GM12878 (cell line): ENCODE measurements at regions of chr1 and their contacts with region 1.

Region 1: DNA sequence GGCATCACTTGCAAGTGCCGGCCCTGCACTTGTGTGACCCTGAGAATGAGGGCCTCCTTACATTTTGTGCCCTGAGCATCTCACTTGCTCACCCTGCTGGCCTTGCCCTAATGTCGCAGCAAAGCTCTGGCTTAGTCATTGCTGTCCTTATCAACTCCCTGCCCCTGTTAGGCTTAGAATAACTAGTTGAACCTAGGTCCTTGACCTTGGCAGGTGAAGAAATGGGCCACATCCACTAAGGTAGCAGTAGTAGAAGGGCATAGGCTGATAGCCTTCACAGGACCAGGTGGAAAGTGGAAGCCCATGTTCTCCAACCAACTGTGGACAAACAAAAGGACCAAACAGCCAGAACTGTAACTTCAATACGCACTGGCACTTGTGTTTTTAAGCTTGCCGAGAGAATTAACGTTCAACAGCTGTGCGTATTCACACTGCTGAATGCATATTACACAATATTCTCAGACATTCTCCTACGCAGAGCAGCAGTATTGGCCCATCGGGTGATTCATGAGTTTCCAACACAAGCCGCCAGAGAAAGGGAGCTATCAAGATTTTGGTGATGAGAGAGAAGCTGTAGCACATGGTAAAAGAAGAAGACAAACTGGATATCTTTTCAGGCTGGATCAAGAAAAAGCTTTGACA is 27.7 kb upstream of the PTGFRN start:
- DNase-seq: no peak
- ATAC-seq: peak; percentile 69
- H3K4me3 ChIP-seq: no peak overlapping the region
- H3K27ac ChIP-seq: no peak overlapping the region
- H3K4me1 ChIP-seq: peaks cover 14% of the 10 kb centered on the region; the same call in 1 of the 2 replicates
- H3K27me3 ChIP-seq: no peaks in the 10 kb centered on the region
- CTCF ChIP-seq: peak; percentile 45 to 73 (median 65)
- EP300 ChIP-seq: no peak
- POLR2A ChIP-seq: no peak
- RAD21 ChIP-seq: peak; percentile 79

Region 2: GRCh38 chr1:116679091-116679827 is 202.7 kb before region 1 on chr1:
- CTCF ChIA-PET with region 1: no interaction called
- POLR2A ChIA-PET with region 1: no interaction called
- RAD21 ChIA-PET with region 1: no interaction called
- SMC1A ChIA-PET with region 1: no interaction called
- in situ Hi-C with region 1: no loop called
- intact Hi-C with region 1: no loop called
- DNase-seq: no peak
- ATAC-seq: no peak; the same call in 2 of the 3 replicates
- H3K4me3 ChIP-seq: no peak overlapping the region
- H3K27ac ChIP-seq: no peak overlapping the region
- H3K4me1 ChIP-seq: no peaks in the 10 kb centered on the region
- H3K27me3 ChIP-seq: no peaks in the 10 kb centered on the region
- CTCF ChIP-seq: 0 out of 6 replicates have a peak, but pooled peaks of 1 of the 3 experiments have one; percentile 12
- EP300 ChIP-seq: no peak
- POLR2A ChIP-seq: no peak
- RAD21 ChIP-seq: no peak

Region 3: GRCh38 chr1:116724765-116725375 is 157.1 kb before region 1 on chr1:
- CTCF ChIA-PET with region 1: interaction called, 47 read pairs
- POLR2A ChIA-PET with region 1: interaction called, 10 read pairs
- RAD21 ChIA-PET with region 1: interaction called, 6 read pairs
- SMC1A ChIA-PET with region 1: interaction called, 13 read pairs
- in situ Hi-C with region 1: no loop called
- intact Hi-C with region 1: no loop called
- DNase-seq: no peak
- ATAC-seq: peak; percentile 88
- H3K4me3 ChIP-seq: no peak overlapping the region
- H3K27ac ChIP-seq: no peak overlapping the region
- H3K4me1 ChIP-seq: no peaks in the 10 kb centered on the region
- H3K27me3 ChIP-seq: no peaks in the 10 kb centered on the region
- CTCF ChIP-seq: peak; percentile 70 to 78 (median 72)
- EP300 ChIP-seq: no peak
- POLR2A ChIP-seq: no peak
- RAD21 ChIP-seq: peak; percentile 80

Region 4: GRCh38 chr1:116794804-116795481 is 87.1 kb before region 1 on chr1:
- CTCF ChIA-PET with region 1: interaction called, 8 read pairs
- POLR2A ChIA-PET with region 1: no interaction called
- RAD21 ChIA-PET with region 1: interaction called, 12 read pairs
- SMC1A ChIA-PET with region 1: interaction called, 4 read pairs
- in situ Hi-C with region 1: no loop called
- intact Hi-C with region 1: no loop called
- DNase-seq: peak; percentile 87
- ATAC-seq: peak; percentile 96
- H3K4me3 ChIP-seq: peak overlapping the region; percentile 14; the same call in 1 of the 2 replicates
- H3K27ac ChIP-seq: peak overlapping the region; percentile 57
- H3K4me1 ChIP-seq: peaks cover 11% of the 10 kb centered on the region
- H3K27me3 ChIP-seq: no peaks in the 10 kb centered on the region
- CTCF ChIP-seq: no peak
- EP300 ChIP-seq: peak; percentile 71 to 87
- POLR2A ChIP-seq: no peak
- RAD21 ChIP-seq: no peak

Region 5: GRCh38 chr1:116833718-116834117 is 48.3 kb before region 1 on chr1:
- CTCF ChIA-PET with region 1: interaction called, 68 read pairs
- POLR2A ChIA-PET with region 1: interaction called, 5 read pairs
- RAD21 ChIA-PET with region 1: interaction called, 96 read pairs
- SMC1A ChIA-PET with region 1: interaction called, 57 read pairs
- in situ Hi-C with region 1: no loop called
- intact Hi-C with region 1: no loop called
- DNase-seq: no peak
- ATAC-seq: no peak
- H3K4me3 ChIP-seq: no peak overlapping the region
- H3K27ac ChIP-seq: no peak overlapping the region
- H3K4me1 ChIP-seq: no peaks in the 10 kb centered on the region
- H3K27me3 ChIP-seq: no peaks in the 10 kb centered on the region; a peak in 1 of 4 replicates
- CTCF ChIP-seq: no peak
- EP300 ChIP-seq: no peak
- POLR2A ChIP-seq: no peak
- RAD21 ChIP-seq: no peak

Region 6: DNA sequence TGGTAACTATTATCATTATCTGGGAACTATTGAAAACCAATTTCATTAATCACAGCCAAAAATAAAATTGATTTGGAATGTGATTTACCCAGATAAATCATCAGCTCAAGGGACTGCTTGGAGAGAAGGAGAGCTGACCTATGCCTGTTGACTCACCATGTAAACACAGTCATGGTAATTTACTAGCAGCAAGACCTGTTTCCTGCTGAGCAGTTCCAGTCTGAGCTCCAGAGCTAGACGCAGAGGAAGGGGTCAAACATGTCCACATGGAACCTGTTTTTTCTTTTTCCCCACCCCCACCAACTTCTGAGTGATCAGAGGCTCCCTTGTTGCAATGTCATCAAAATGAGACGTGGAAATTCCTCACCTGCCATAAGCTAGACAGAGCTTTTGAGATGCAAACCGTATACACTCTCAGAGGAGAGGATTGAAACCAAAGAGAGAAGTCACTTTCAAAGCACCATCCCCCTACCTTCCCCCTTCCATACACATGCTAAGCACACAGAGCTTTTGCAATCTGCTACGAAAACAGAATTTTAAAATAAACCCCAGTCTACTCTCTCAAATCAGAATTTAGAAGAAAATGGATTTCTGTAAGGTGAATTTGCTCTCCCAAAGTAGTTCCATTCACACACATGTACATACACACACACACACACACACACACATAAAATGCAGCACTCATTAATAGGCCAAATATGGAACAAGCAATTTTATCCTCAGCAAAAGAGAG is 28.2 kb before region 1 on chr1:
- CTCF ChIA-PET with region 1: interaction called, 16 read pairs
- POLR2A ChIA-PET with region 1: interaction called, 12 read pairs
- RAD21 ChIA-PET with region 1: interaction called, 27 read pairs
- SMC1A ChIA-PET with region 1: interaction called, 122 read pairs
- in situ Hi-C with region 1: no loop called
- intact Hi-C with region 1: no loop called
- DNase-seq: no peak
- ATAC-seq: peak; percentile 81
- H3K4me3 ChIP-seq: no peak overlapping the region
- H3K27ac ChIP-seq: no peak overlapping the region
- H3K4me1 ChIP-seq: 0 out of 2 replicates have a peak, but pooled peaks cover 3% of the 10 kb centered on the region
- H3K27me3 ChIP-seq: no peaks in the 10 kb centered on the region
- CTCF ChIP-seq: no peak
- EP300 ChIP-seq: no peak
- POLR2A ChIP-seq: no peak
- RAD21 ChIP-seq: no peak

Region 7: DNA sequence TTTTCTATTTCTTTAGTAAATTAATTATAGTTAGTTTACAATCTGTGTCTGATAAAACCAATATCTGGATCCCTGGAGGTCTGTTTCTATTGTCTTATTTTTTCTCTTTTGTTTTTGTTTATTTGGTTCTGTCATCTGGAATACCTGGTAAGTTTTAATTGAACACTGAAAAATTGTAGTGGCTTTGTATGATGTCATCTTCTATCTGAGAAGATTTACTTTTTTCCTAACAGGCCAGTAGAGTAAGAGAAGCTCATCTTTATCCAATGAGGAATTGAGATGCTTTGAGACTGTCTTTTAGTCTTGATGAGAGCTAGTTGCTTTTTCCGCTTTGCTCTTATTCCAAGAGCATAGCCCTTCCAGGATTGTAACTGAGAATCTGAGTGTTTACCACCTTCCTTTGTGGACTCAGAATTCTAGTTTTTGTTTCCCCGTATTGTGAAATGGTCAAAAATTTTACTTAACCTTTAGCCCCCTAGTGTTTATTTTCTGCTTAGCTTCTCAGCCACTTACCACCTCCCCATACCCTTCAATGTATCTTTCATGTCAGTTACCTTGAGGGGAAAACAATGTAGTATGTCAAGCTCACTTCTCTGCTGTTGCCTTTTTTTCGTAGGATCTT is 52.7 kb after region 1 on chr1:
- CTCF ChIA-PET with region 1: interaction called, 13 read pairs
- POLR2A ChIA-PET with region 1: interaction called, 3 read pairs
- RAD21 ChIA-PET with region 1: interaction called, 22 read pairs
- SMC1A ChIA-PET with region 1: interaction called, 25 read pairs
- in situ Hi-C with region 1: no loop called
- intact Hi-C with region 1: loop called (anchors 5 kb)
- DNase-seq: no peak
- ATAC-seq: peak; percentile 83
- H3K4me3 ChIP-seq: no peak overlapping the region
- H3K27ac ChIP-seq: no peak overlapping the region
- H3K4me1 ChIP-seq: no peaks in the 10 kb centered on the region
- H3K27me3 ChIP-seq: no peaks in the 10 kb centered on the region
- CTCF ChIP-seq: peak; percentile 37 to 54 (median 43); a peak in 5 of 6 replicates
- EP300 ChIP-seq: no peak
- POLR2A ChIP-seq: no peak
- RAD21 ChIP-seq: peak; percentile 39; the same call in 1 of the 2 replicates

Region 8: GRCh38 chr1:117059678-117060440 is 177.9 kb after region 1 on chr1 and contains the start of gene TTF2:
- CTCF ChIA-PET with region 1: interaction called, 9 read pairs
- POLR2A ChIA-PET with region 1: interaction called, 15 read pairs
- RAD21 ChIA-PET with region 1: interaction called, 21 read pairs
- SMC1A ChIA-PET with region 1: interaction called, 10 read pairs
- in situ Hi-C with region 1: no loop called
- intact Hi-C with region 1: no loop called
- DNase-seq: peak; percentile 99
- ATAC-seq: peak; percentile 86
- H3K4me3 ChIP-seq: peak within 1 kb of the TSS; percentile 84
- H3K27ac ChIP-seq: peak within 1 kb of the TSS; percentile 90
- H3K4me1 ChIP-seq: peaks cover 4% of the 10 kb centered on the region
- H3K27me3 ChIP-seq: no peaks in the 10 kb centered on the region
- CTCF ChIP-seq: peak in 1 of 3 experiments; percentile 26; a peak in 1 of 6 replicates
- EP300 ChIP-seq: peak in 1 of 2 experiments; percentile 40; a peak in 1 of 4 replicates
- POLR2A ChIP-seq: peak; percentile 85
- RAD21 ChIP-seq: no peak
- polyA plus RNA-seq, gene TTF2: 17.7 to 20.8 TPM

Region 9: GRCh38 chr1:117188170-117188815 is 306.3 kb after region 1 on chr1:
- CTCF ChIA-PET with region 1: no interaction called
- POLR2A ChIA-PET with region 1: no interaction called
- RAD21 ChIA-PET with region 1: no interaction called
- SMC1A ChIA-PET with region 1: no interaction called
- in situ Hi-C with region 1: no loop called
- intact Hi-C with region 1: no loop called
- DNase-seq: no peak
- ATAC-seq: no peak
- H3K4me3 ChIP-seq: no peak overlapping the region
- H3K27ac ChIP-seq: no peak overlapping the region
- H3K4me1 ChIP-seq: no peaks in the 10 kb centered on the region
- H3K27me3 ChIP-seq: no peaks in the 10 kb centered on the region; a peak in 1 of 4 replicates
- CTCF ChIP-seq: no peak
- EP300 ChIP-seq: no peak
- POLR2A ChIP-seq: no peak
- RAD21 ChIP-seq: no peak